ENCODE measurements at regions of chr10 and their contacts with region 1.

Region 1: GRCh38 chr10:50846753-50847152 is 38.7 kb downstream of the A1CF start:
- DNase-seq: peak; percentile 54
- ATAC-seq: peak; percentile 39
- H3K4me3 ChIP-seq: no peak overlapping the region
- H3K27ac ChIP-seq: no peak overlapping the region
- H3K4me1 ChIP-seq: peaks cover 12% of the 10 kb centered on the region
- H3K27me3 ChIP-seq: peaks cover 26% of the 10 kb centered on the region
- CTCF ChIP-seq: no peak

Region 2: GRCh38 chr10:50823789-50824188 is 23.0 kb before region 1 on chr10:
- CTCF ChIA-PET with region 1: no interaction called
- POLR2A ChIA-PET with region 1: no interaction called
- intact Hi-C with region 1: loop called (anchors 2 kb)
- DNase-seq: no peak
- ATAC-seq: no peak
- H3K4me3 ChIP-seq: no peak overlapping the region
- H3K27ac ChIP-seq: no peak overlapping the region
- H3K4me1 ChIP-seq: no peaks in the 10 kb centered on the region
- H3K27me3 ChIP-seq: peaks cover 83% of the 10 kb centered on the region
- CTCF ChIP-seq: no peak

Region 3: GRCh38 chr10:50917486-50917885 is 70.7 kb after region 1 on chr10:
- CTCF ChIA-PET with region 1: no interaction called
- POLR2A ChIA-PET with region 1: interaction called, 5 read pairs
- intact Hi-C with region 1: loop called (anchors 2 kb)
- DNase-seq: peak; percentile 99
- ATAC-seq: peak; percentile 94
- H3K4me3 ChIP-seq: no peak overlapping the region
- H3K27ac ChIP-seq: peak overlapping the region; percentile 2; the same call in 1 of the 2 replicates
- H3K4me1 ChIP-seq: peaks cover 30% of the 10 kb centered on the region
- H3K27me3 ChIP-seq: 0 out of 2 replicates have a peak, but pooled peaks cover 7% of the 10 kb centered on the region
- CTCF ChIP-seq: no peak

Region 4: DNA sequence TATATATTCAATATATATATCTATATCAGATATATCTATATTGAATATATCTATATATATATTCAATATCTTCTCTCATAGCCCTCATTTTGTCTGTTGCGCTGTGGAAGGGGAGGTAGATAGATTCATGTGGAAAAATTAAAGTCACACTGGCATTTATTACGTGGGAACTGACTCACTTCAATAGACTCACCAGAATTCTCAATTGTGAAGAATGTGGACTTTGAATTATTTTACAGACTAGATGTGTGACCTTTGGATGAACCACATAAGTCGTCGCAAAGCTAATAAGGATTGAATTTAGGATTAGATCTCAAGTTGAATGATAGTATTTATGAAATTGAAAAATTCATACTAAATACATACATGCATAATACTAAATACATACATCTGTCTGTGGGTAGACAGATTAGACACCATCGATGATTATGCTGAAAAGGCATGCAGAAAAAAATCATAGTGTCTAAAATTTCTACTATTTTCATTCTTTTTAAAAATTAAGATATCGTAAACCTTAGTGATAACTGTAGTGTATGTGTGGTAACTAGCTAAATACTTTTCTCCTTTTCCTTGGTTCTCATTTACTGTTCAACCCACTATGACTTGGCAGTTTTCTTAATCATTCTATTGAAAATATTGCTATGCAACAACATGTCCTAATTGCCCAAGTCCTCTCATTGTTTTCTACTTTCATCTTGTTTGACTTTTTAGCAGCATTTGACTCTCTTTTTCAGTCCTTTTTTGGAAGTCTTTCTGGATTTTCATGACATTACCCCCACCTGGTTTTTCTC is 100.4 kb after region 1 on chr10:
- CTCF ChIA-PET with region 1: no interaction called
- POLR2A ChIA-PET with region 1: no interaction called
- intact Hi-C with region 1: no loop called
- DNase-seq: no peak
- ATAC-seq: no peak
- H3K4me3 ChIP-seq: no peak overlapping the region
- H3K27ac ChIP-seq: no peak overlapping the region
- H3K4me1 ChIP-seq: no peaks in the 10 kb centered on the region
- H3K27me3 ChIP-seq: peaks cover 87% of the 10 kb centered on the region
- CTCF ChIP-seq: no peak

Measured in PC-3 (cell line).